Activated B cell treated with CpG ODN at 0.5 μM for 24 hours (primary cell): ENCODE measurements at regions of chr12 and their contacts with region 1.

Region 1: GRCh38 chr12:71754461-71755145 is at the start of gene RAB21:
- DNase-seq: peak; percentile 95
- ATAC-seq: peak; percentile 84
- H3K4me3 Mint-ChIP-seq: peak within 1 kb of the TSS; percentile 96
- H3K27ac Mint-ChIP-seq: peak within 1 kb of the TSS; percentile 97
- H3K4me1 Mint-ChIP-seq: peaks cover 43% of the 10 kb centered on the region
- H3K27me3 Mint-ChIP-seq: no peaks in the 10 kb centered on the region
- CTCF ChIP-seq: no peak
- total RNA-seq, gene RAB21: 112 and 121 TPM in 2 replicates

Region 2: DNA sequence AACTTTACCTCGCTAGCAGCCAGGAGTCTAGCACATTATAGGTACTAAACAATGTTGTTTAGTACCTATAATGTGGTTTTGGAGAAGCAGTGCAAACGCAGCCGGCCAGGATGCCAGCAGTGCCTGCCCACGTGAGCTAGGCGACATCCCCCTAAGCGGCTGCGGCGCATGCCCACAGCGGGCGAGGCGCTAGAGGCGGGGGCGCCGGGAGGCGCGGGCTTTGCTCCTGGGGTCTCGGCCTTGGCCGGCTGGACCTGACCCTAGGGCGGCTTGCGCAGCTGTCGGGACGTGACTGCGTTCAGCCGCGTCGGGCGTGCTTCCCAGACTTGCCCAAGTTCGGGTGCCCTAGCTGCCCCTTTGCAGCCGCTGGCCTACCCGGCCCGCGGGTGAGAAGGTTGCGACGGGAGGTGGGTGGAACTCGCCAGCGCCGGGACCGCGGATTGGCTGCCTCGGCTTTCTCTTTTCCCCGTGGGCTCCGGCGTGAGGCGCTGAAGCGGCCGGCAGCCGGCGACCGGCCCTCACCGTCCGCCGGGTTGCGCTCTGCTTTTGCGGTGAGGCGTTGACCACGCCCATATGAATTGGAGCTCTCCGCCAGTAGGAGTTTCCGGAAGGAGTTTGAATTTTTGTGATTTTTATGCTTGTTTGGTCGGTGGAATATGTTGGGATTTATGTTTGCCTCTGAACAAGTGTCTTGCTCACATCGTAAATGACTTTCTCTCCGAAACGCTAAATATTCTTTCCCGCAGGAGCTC is 68.5 kb before region 1 on chr12 and contains the start of gene TMEM19:
- CTCF ChIA-PET with region 1: interaction called, 6 read pairs
- POLR2A ChIA-PET with region 1: interaction called, 72 read pairs
- intact Hi-C with region 1: loop called (anchors 1 kb)
- DNase-seq: peak; percentile 87
- ATAC-seq: peak; percentile 87
- H3K4me3 Mint-ChIP-seq: peak within 1 kb of the TSS; percentile 93
- H3K27ac Mint-ChIP-seq: peak within 1 kb of the TSS; percentile 97
- H3K4me1 Mint-ChIP-seq: peaks cover 56% of the 10 kb centered on the region
- H3K27me3 Mint-ChIP-seq: no peaks in the 10 kb centered on the region
- CTCF ChIP-seq: no peak
- total RNA-seq, gene TMEM19: 42.6 and 46.7 TPM in 2 replicates

Region 3: GRCh38 chr12:71694099-71694820 is 60.3 kb before region 1 on chr12:
- CTCF ChIA-PET with region 1: no interaction called
- POLR2A ChIA-PET with region 1: interaction called, 12 read pairs
- intact Hi-C with region 1: loop called (anchors 2 kb)
- DNase-seq: no peak
- ATAC-seq: peak; percentile 83
- H3K4me3 Mint-ChIP-seq: peak overlapping the region; percentile 76
- H3K27ac Mint-ChIP-seq: peak overlapping the region; percentile 97
- H3K4me1 Mint-ChIP-seq: peaks cover 77% of the 10 kb centered on the region
- H3K27me3 Mint-ChIP-seq: no peaks in the 10 kb centered on the region
- CTCF ChIP-seq: no peak